Natural killer cell (primary cell): ENCODE measurements at regions of chr4 and their contacts with region 1.

Region 1: GRCh38 chr4:36220776-36221175 is 23.5 kb downstream of the ARAP2 start:
- DNase-seq: no peak
- ATAC-seq: no peak
- H3K4me3 ChIP-seq: no peak overlapping the region
- H3K4me3 Mint-ChIP-seq: no peak overlapping the region
- H3K27ac ChIP-seq: no peak overlapping the region
- H3K27ac Mint-ChIP-seq: peak overlapping the region in 1 of 2 donors; percentile 54
- H3K4me1 ChIP-seq: peaks cover 18% of the 10 kb centered on the region
- H3K4me1 Mint-ChIP-seq: peaks cover 57% of the 10 kb centered on the region in 2 donors
- H3K27me3 ChIP-seq: no peaks in the 10 kb centered on the region
- H3K27me3 Mint-ChIP-seq: no peaks in the 10 kb centered on the region
- CTCF ChIP-seq: no peak

Region 2: GRCh38 chr4:35818520-35818919 is 402.3 kb before region 1 on chr4:
- intact Hi-C with region 1: no loop called
- DNase-seq: no peak
- ATAC-seq: peak in 2 of 3 donors; percentile 53 to 78
- H3K4me3 ChIP-seq: no peak overlapping the region
- H3K4me3 Mint-ChIP-seq: no peak overlapping the region
- H3K27ac ChIP-seq: no peak overlapping the region
- H3K27ac Mint-ChIP-seq: no peak overlapping the region
- H3K4me1 ChIP-seq: no peaks in the 10 kb centered on the region
- H3K4me1 Mint-ChIP-seq: peaks cover 9 to 10% of the 10 kb centered on the region in 2 donors
- H3K27me3 ChIP-seq: no peaks in the 10 kb centered on the region
- H3K27me3 Mint-ChIP-seq: peaks cover 0 to 5% of the 10 kb centered on the region in 2 donors
- CTCF ChIP-seq: no peak

Region 3: GRCh38 chr4:36064147-36064546 is 156.6 kb before region 1 on chr4:
- intact Hi-C with region 1: no loop called
- DNase-seq: no peak
- ATAC-seq: no peak
- H3K4me3 ChIP-seq: no peak overlapping the region
- H3K4me3 Mint-ChIP-seq: no peak overlapping the region
- H3K27ac ChIP-seq: no peak overlapping the region
- H3K27ac Mint-ChIP-seq: peak overlapping the region; percentile 33 to 73
- H3K4me1 ChIP-seq: no peaks in the 10 kb centered on the region
- H3K4me1 Mint-ChIP-seq: peaks cover 18 to 20% of the 10 kb centered on the region in 2 donors
- H3K27me3 ChIP-seq: no peaks in the 10 kb centered on the region
- H3K27me3 Mint-ChIP-seq: no peaks in the 10 kb centered on the region
- CTCF ChIP-seq: no peak

Region 4: DNA sequence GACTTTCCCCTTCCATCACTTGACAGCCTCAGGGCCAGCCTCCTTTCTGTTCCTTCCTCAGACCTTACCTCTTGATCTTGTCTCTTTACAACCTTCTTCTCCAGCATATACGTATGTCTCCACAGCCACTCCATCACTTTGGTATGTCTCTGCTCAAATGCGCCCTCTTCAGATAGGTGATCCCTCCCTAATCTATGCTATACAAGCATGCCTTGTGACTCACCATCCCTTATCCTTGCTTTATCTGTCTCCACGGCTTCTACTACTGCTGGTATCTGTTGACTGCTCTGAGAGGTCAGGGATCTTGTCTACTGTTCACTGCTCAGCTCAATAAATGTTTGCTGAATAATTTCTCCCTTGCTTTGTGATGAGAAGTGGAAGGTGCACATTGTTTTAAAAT is 14.5 kb after region 1 on chr4:
- intact Hi-C with region 1: loop called (anchors 2 kb)
- DNase-seq: no peak
- ATAC-seq: peak in 1 of 3 donors; percentile 39
- H3K4me3 ChIP-seq: no peak overlapping the region
- H3K4me3 Mint-ChIP-seq: no peak overlapping the region
- H3K27ac ChIP-seq: no peak overlapping the region
- H3K27ac Mint-ChIP-seq: peak overlapping the region in 1 of 2 donors; percentile 16
- H3K4me1 ChIP-seq: peaks cover 47% of the 10 kb centered on the region
- H3K4me1 Mint-ChIP-seq: peaks cover 91 to 96% of the 10 kb centered on the region in 2 donors
- H3K27me3 ChIP-seq: no peaks in the 10 kb centered on the region
- H3K27me3 Mint-ChIP-seq: no peaks in the 10 kb centered on the region
- CTCF ChIP-seq: no peak

Region 5: DNA sequence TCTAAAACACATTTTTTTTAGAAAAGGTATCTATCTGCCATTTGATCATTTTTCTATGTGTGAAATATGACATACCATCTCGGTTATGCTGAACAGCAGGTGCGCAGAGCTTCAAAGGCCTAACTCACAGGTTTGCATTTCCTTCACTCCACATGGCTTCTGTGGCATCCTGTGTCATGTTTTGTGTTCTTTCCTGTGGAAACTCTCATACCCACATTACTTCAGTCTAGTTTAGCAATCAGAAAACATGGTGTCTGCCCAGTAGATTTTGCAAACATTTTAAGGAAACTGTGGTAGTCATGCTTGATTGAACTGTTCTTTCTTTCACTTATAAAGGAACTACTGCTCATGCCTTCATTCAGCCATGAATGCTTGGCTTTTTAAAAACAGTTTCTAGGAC is 34.8 kb after region 1 on chr4:
- intact Hi-C with region 1: no loop called
- DNase-seq: peak; percentile 52 to 92
- ATAC-seq: peak; percentile 77 to 91 (median 90)
- H3K4me3 ChIP-seq: no peak overlapping the region
- H3K4me3 Mint-ChIP-seq: peak overlapping the region; percentile 87
- H3K27ac ChIP-seq: peak overlapping the region; percentile 74
- H3K27ac Mint-ChIP-seq: peak overlapping the region; percentile 83 to 94
- H3K4me1 ChIP-seq: peaks cover 23% of the 10 kb centered on the region
- H3K4me1 Mint-ChIP-seq: peaks cover 53 to 63% of the 10 kb centered on the region in 2 donors
- H3K27me3 ChIP-seq: no peaks in the 10 kb centered on the region
- H3K27me3 Mint-ChIP-seq: no peaks in the 10 kb centered on the region
- CTCF ChIP-seq: no peak